Gastrocnemius medialis (tissue), 4 donors: ENCODE measurements at regions of chr6 and their contacts with region 1.

Region 1: GRCh38 chr6:50128420-50129005 is 78.8 kb upstream of the DEFB112 start:
- DNase-seq: no peak
- ATAC-seq: no peak
- H3K4me3 ChIP-seq: no peak overlapping the region
- H3K27ac ChIP-seq: no peak overlapping the region
- H3K4me1 ChIP-seq: no peaks in the 10 kb centered on the region
- H3K27me3 ChIP-seq: no peaks in the 10 kb centered on the region
- CTCF ChIP-seq: peak in 2 of 5 experiments; percentile 37 to 57
- POLR2A ChIP-seq: no peak

Region 2: DNA sequence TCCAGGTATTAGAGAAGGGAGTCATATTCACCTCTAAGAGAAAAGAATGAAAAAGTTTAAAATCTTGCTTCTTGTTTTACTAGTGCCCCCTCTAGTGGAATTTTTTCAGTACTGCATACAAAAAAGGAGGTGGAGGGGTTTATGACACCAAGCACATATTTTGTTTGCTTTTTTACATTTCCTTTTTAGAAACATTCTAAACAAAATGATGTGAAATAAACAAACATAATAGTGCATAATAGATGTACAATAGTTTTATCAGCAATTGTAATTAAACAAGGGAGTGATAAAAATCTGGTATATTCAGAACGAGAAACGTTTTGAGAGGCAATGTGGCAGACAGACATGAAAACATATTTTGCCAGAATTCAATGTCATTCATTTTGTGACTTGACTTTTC is 473.8 kb after region 1 on chr6:
- in situ Hi-C with region 1: loop called in 2 of 4 experiments (anchors 10 to 25 kb)
- intact Hi-C with region 1: loop called (anchors 2 kb)
- DNase-seq: no peak
- ATAC-seq: no peak
- H3K4me3 ChIP-seq: no peak overlapping the region
- H3K27ac ChIP-seq: no peak overlapping the region
- H3K4me1 ChIP-seq: no peaks in the 10 kb centered on the region
- H3K27me3 ChIP-seq: no peaks in the 10 kb centered on the region
- CTCF ChIP-seq: peak; percentile 10 to 69 (median 46)
- POLR2A ChIP-seq: no peak